Left colon (tissue), 2 donors: ENCODE measurements at regions of chr22 and their contacts with region 1.

Region 1: GRCh38 chr22:20429254-20430100 is 8.1 kb downstream of the SCARF2 start:
- DNase-seq: peak; percentile 74 to 87
- ATAC-seq: peak; percentile 84

Region 2: GRCh38 chr22:20495861-20496681 is 66.6 kb after region 1 on chr22:
- intact Hi-C with region 1: loop called in 1 of 2 experiments (anchors 10 kb)
- DNase-seq: peak; percentile 91 to 93
- ATAC-seq: peak; percentile 89